ENCODE measurements at regions of chr18 and their contacts with region 1.

Region 1: GRCh38 chr18:8988261-8988871 is 114.1 kb upstream of the NDUFV2 start:
- DNase-seq: peak; percentile 41 to 65
- ATAC-seq: peak; percentile 94 to 97
- H3K4me3 ChIP-seq: no peak overlapping the region
- H3K27ac ChIP-seq: peak overlapping the region; percentile 41 to 62; a peak in 4 of 6 replicates
- H3K4me1 ChIP-seq: peaks cover 13% of the 10 kb centered on the region
- CTCF ChIP-seq: peak; percentile 67
- EP300 ChIP-seq: no peak
- POLR2A ChIP-seq: no peak
- RAD21 ChIP-seq: peak; percentile 88 to 92

Region 2: DNA sequence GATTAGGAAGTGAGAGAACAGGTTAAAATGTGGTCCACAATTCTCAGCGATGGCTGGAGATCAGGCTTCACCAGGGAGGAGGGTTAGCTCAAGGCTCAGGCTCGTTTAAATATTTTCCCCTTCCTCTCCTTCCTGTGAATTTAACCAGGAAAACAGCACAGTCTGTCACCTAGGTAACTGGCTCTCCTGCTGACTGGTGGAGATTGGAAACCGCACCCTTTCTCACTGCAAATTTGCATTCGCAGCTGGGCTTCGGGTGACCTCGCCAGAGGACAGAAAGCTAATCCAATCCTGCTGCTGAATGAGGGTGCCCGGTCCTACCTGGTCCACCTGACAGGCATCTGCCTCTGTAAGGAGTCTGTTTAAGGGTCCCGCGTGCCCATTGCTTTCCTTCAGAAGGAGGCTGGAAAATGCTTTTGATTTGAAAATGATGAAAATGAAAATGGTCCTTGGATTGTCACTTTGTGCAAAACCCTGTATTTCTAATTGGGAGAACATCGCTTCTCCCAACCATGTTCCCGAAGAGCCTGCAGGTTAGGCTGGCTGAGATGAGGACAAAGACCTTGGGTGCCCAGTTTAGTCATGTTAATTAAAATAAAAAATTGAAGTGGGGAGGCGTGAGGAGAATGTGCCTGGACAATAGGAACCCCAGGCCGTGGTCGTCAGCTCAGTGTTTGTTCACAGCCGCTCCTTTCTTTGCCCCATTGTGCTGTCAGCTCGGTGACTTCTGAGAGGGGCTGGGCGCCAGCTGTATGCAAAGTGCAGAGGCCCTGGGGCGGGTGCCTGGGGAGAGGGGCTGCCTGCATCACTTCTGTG is 326.4 kb before region 1 on chr18:
- CTCF ChIA-PET with region 1: interaction called, 65 read pairs
- POLR2A ChIA-PET with region 1: no interaction called
- DNase-seq: peak in 1 of 2 experiments; percentile 14
- ATAC-seq: peak; percentile 31 to 54; a peak in 3 of 6 replicates
- H3K4me3 ChIP-seq: no peak overlapping the region
- H3K27ac ChIP-seq: 0 out of 6 replicates have a peak overlapping the region, but pooled peaks of 1 of the 2 experiments have one; percentile 30
- H3K4me1 ChIP-seq: peaks cover 34% of the 10 kb centered on the region
- CTCF ChIP-seq: no peak
- EP300 ChIP-seq: no peak
- POLR2A ChIP-seq: no peak
- RAD21 ChIP-seq: no peak

Region 3: GRCh38 chr18:8696749-8697211 is 291.6 kb before region 1 on chr18:
- CTCF ChIA-PET with region 1: interaction called, 30 read pairs
- POLR2A ChIA-PET with region 1: no interaction called
- DNase-seq: peak; percentile 56 to 60
- ATAC-seq: peak; percentile 85 to 86; a peak in 5 of 6 replicates
- H3K4me3 ChIP-seq: no peak overlapping the region
- H3K27ac ChIP-seq: peak overlapping the region in 1 of 2 experiments; percentile 49; a peak in 1 of 6 replicates
- H3K4me1 ChIP-seq: peaks cover 17% of the 10 kb centered on the region
- CTCF ChIP-seq: peak; percentile 77
- EP300 ChIP-seq: no peak
- POLR2A ChIP-seq: no peak
- RAD21 ChIP-seq: peak; percentile 67 to 68

Region 4: GRCh38 chr18:8800449-8800848 is 187.9 kb before region 1 on chr18:
- CTCF ChIA-PET with region 1: interaction called, 35 read pairs
- POLR2A ChIA-PET with region 1: no interaction called
- DNase-seq: peak; percentile 60 to 93
- ATAC-seq: peak; percentile 89
- H3K4me3 ChIP-seq: no peak overlapping the region
- H3K27ac ChIP-seq: peak overlapping the region; percentile 96 to 99
- H3K4me1 ChIP-seq: peaks cover 97% of the 10 kb centered on the region
- CTCF ChIP-seq: no peak
- EP300 ChIP-seq: peak; percentile 59 to 80; a peak in 3 of 5 replicates
- POLR2A ChIP-seq: no peak
- RAD21 ChIP-seq: peak in 1 of 2 experiments; percentile 35; a peak in 2 of 5 replicates

Region 5: GRCh38 chr18:8835521-8835953 is 152.8 kb before region 1 on chr18:
- CTCF ChIA-PET with region 1: no interaction called
- POLR2A ChIA-PET with region 1: no interaction called
- DNase-seq: no peak
- ATAC-seq: peak; percentile 51 to 60; a peak in 4 of 6 replicates
- H3K4me3 ChIP-seq: no peak overlapping the region
- H3K27ac ChIP-seq: peak overlapping the region in 1 of 2 experiments; percentile 66; a peak in 3 of 6 replicates
- H3K4me1 ChIP-seq: peaks cover 6% of the 10 kb centered on the region; the same call in 2 of the 3 replicates
- CTCF ChIP-seq: no peak
- EP300 ChIP-seq: no peak
- POLR2A ChIP-seq: no peak
- RAD21 ChIP-seq: no peak

Region 6: GRCh38 chr18:8930990-8931648 is 57.2 kb before region 1 on chr18:
- CTCF ChIA-PET with region 1: no interaction called
- POLR2A ChIA-PET with region 1: no interaction called
- DNase-seq: no peak
- ATAC-seq: no peak
- H3K4me3 ChIP-seq: no peak overlapping the region
- H3K27ac ChIP-seq: no peak overlapping the region
- H3K4me1 ChIP-seq: no peaks in the 10 kb centered on the region
- CTCF ChIP-seq: no peak
- EP300 ChIP-seq: no peak
- POLR2A ChIP-seq: no peak
- RAD21 ChIP-seq: no peak